Activated CD4-positive, alpha-beta memory T cell treated with anti-CD3 and anti-CD28 coated beads, Interleukin-2, amount 10 ng/mL, durations not matched to agents 7 days and 5 days (primary cell): ENCODE measurements at regions of chr12 and their contacts with region 1.

Region 1: GRCh38 chr12:111396726-111397445 is 8.8 kb upstream of the SH2B3 start:
- DNase-seq: peak; percentile 86
- H3K4me3 Mint-ChIP-seq: no peak overlapping the region
- H3K27ac Mint-ChIP-seq: no peak overlapping the region
- H3K4me1 Mint-ChIP-seq: peaks cover 25% of the 10 kb centered on the region
- H3K27me3 Mint-ChIP-seq: peaks cover 33% of the 10 kb centered on the region

Region 2: DNA sequence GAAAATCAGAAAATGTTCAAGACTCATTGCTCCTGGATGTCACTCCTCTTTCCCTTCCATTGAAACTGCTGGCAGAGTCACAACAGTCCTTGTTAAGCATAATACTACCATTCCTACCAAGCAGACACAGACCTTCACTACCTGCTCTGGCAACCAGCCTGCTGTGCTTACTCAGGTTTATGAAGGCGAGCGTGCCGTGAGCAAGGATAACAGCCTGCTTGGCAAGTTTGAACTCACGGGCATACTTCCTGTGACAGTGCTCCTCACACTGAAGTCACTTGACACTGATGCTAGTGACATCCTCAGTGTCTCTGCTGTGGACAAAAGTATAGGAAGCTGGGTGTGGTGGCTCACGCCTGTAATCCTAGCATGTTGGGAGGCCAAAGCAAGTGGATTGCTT is 12.3 kb before region 1 on chr12:
- CTCF ChIA-PET with region 1: interaction called, 18 read pairs
- POLR2A ChIA-PET with region 1: no interaction called
- DNase-seq: no peak
- H3K4me3 Mint-ChIP-seq: no peak overlapping the region
- H3K27ac Mint-ChIP-seq: no peak overlapping the region
- H3K4me1 Mint-ChIP-seq: no peaks in the 10 kb centered on the region
- H3K27me3 Mint-ChIP-seq: peaks cover 39% of the 10 kb centered on the region

Region 3: DNA sequence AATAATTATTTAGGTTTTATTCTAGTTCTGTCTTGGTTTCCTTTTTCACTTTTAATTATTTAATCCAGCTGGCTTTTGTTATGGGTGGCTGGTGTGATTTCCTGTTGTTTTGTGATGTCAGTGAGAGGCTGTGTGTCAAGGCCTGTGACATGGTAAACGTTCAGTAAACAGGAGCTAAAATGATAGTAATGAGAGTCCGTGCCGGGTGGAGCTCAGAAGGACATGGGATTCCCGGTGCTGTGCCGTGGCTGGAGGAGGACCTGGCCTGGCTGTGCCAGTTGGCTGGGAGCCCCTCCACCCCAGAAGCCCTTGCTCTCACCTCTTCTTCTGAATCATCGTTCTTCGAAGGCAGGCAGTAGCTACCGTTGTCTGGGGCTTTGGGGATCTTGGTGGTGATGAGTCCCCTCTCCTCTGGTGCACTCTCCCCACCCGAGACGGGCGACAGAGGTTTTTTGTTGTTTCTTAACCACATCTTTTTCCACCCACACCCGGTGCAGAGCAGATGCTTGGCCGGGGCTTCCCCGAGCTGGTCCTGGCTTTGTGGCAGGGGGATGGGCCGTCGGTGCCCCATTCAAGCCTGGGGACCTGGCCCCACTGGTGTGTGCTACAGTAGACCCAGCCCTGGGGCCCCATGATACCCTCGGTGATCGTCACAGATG is 37.9 kb after region 1 on chr12:
- CTCF ChIA-PET with region 1: interaction called, 20 read pairs
- POLR2A ChIA-PET with region 1: interaction called, 7 read pairs
- DNase-seq: peak; percentile 82
- H3K4me3 Mint-ChIP-seq: peak overlapping the region; percentile 71
- H3K27ac Mint-ChIP-seq: peak overlapping the region; percentile 97
- H3K4me1 Mint-ChIP-seq: peaks cover 90% of the 10 kb centered on the region
- H3K27me3 Mint-ChIP-seq: peaks cover 2% of the 10 kb centered on the region

Region 4: DNA sequence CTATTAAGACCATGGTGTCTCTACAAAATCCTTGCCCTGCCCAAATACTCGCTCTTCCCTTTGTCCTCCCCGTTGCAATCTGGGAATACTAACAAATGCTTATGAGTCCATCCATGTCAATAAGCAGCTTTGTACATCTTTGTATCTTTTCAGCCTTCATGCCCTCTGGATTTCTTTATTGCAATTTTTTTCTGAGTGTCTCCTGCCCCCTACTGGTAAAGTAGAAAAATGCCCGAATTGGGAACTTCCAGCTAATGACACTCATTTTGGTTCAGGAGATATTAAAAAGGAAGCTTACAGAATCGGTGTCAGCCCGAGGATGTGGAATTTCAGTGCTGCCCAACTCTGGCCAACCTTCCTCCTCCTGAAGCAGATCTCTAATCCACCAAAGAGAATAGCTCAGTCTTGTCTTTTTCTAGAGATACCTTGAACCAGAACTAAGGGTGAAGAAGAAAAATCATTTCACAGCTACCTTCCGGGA is 54.8 kb after region 1 on chr12:
- CTCF ChIA-PET with region 1: interaction called, 527 read pairs
- POLR2A ChIA-PET with region 1: interaction called, 257 read pairs
- DNase-seq: peak; percentile 16
- H3K4me3 Mint-ChIP-seq: no peak overlapping the region
- H3K27ac Mint-ChIP-seq: no peak overlapping the region
- H3K4me1 Mint-ChIP-seq: peaks cover 43% of the 10 kb centered on the region
- H3K27me3 Mint-ChIP-seq: no peaks in the 10 kb centered on the region

Region 5: GRCh38 chr12:111482462-111482861 is 85.6 kb after region 1 on chr12:
- CTCF ChIA-PET with region 1: interaction called, 40 read pairs
- POLR2A ChIA-PET with region 1: no interaction called
- DNase-seq: no peak
- H3K4me3 Mint-ChIP-seq: no peak overlapping the region
- H3K27ac Mint-ChIP-seq: no peak overlapping the region
- H3K4me1 Mint-ChIP-seq: no peaks in the 10 kb centered on the region
- H3K27me3 Mint-ChIP-seq: no peaks in the 10 kb centered on the region

Region 6: DNA sequence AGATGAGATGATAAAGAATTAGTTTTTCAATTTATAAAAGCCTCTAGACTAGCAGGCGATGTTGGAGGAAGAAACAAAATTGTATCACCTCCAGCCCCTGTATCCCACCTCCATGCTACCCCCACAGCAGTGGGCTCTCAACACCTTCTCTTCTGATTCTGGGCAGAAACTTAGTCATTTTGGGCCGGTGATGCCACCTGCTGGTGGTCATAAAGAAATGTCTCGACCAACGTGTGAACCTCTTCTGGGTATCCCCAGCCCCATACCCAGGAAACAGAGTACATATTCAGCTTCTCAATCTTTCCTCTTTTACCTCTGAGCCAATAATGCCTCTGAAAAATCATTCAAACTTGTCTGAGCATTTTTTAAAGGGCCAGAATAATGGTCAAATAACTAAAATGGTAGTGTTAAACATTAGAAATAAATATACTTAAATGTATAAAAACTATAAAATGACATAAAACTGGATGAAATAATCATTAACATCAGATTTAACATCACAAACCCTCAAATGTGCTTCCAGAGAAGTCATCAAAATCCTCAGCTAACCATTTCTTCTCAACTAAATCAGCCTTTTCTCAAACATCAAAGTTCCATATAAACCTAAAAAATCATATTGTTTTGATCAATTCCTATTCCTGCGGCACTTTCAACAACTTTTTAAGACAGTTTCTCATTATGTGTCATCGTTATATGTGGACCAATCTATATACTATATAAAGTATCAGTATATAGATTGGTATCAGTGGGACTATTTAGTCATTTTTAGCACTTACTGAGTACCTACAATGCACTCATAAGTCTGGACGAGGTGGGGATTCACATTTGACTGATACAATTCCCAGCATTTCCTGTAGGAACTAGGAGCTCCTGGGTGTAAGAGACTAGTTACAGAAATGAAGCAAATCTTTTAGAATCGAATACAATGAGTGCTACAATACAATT is 132.8 kb after region 1 on chr12:
- CTCF ChIA-PET with region 1: interaction called, 90 read pairs
- POLR2A ChIA-PET with region 1: interaction called, 4 read pairs
- DNase-seq: peak; percentile 68
- H3K4me3 Mint-ChIP-seq: no peak overlapping the region
- H3K27ac Mint-ChIP-seq: no peak overlapping the region
- H3K4me1 Mint-ChIP-seq: peaks cover 10% of the 10 kb centered on the region
- H3K27me3 Mint-ChIP-seq: no peaks in the 10 kb centered on the region